Naive thymus-derived CD8-positive, alpha-beta T cell (primary cell): ENCODE measurements at regions of chr15 and their contacts with region 1.

Region 1: DNA sequence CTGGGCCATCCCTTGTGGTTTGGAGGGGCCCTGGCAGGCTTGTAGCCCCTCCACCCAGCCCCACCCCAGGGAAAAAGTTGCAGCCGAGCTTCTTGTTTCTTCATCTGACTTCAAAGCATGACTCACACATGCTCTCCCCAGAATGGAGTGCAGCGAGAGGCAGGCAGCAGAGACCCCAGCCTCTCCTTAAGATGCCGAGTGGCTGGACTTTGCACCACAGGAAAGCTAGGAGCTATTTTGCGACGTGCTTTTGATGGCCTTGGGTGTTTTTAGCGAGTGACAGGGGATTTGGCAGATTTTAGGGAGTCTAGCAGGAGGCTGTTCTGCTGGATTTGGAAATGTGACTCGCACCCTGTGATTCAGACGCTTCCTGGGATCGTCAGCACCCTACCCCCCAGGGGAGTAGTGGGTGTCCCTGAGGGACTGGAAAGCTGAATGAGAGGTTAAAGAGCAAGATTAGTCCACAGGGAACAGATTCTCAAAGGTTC is 14.2 kb downstream of the BAHD1 start:
- DNase-seq: peak in 1 of 10 donors; percentile 12
- ATAC-seq: peak; percentile 3 to 41
- H3K4me3 Mint-ChIP-seq: peak overlapping the region; percentile 79 to 94 (median 87)
- H3K27ac Mint-ChIP-seq: peak overlapping the region; percentile 83 to 98 (median 94)
- H3K4me1 Mint-ChIP-seq: peaks cover 59 to 79% (median 75%) of the 10 kb centered on the region in 4 donors
- H3K27me3 Mint-ChIP-seq: no peaks in the 10 kb centered on the region

Region 2: GRCh38 chr15:40470423-40471104 is 15.6 kb after region 1 on chr15 and contains the start of gene CHST14:
- POLR2A ChIA-PET with region 1: interaction called, 25 read pairs
- DNase-seq: peak; percentile 24 to 78 (median 54)
- ATAC-seq: peak; percentile 77 to 81
- H3K4me3 Mint-ChIP-seq: peak within 1 kb of the TSS; percentile 81 to 92 (median 88)
- H3K27ac Mint-ChIP-seq: peak within 1 kb of the TSS; percentile 70 to 97 (median 88)
- H3K4me1 Mint-ChIP-seq: peaks cover 12 to 43% (median 31%) of the 10 kb centered on the region in 4 donors
- H3K27me3 Mint-ChIP-seq: no peaks in the 10 kb centered on the region
- polyA plus RNA-seq, gene CHST14: 0.74 to 1.2 (median 0.77) TPM